ENCODE measurements at regions of chr1 and their contacts with region 1.

Region 1: GRCh38 chr1:99481391-99481996 is 164.4 kb upstream of the PALMD start:
- DNase-seq: no peak
- ATAC-seq: peak; percentile 61

Region 2: DNA sequence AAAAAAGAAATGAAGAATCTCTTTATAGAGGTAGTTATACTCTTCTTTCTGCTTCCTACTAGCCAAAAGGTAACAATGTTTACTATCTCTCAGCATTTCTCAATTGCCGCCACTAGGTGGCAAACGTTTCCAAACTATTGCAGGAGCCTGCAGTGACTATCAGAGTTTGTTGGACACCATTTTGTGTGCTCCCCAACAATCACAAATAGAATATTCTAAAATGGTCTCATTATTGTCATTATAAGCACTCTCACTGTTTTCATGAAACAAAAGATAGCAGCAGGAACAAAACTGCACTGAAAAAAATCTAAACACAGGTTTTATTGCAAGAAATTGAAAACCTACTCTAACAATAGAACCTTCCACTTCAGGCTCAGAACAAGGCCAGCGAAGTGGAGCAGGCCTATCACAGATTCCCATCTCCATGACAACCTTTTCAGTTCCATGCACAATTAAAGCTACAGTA is 301.1 kb before region 1 on chr1:
- intact Hi-C with region 1: loop called (anchors 5 kb)
- DNase-seq: peak; percentile 46
- ATAC-seq: peak; percentile 94

Region 3: DNA sequence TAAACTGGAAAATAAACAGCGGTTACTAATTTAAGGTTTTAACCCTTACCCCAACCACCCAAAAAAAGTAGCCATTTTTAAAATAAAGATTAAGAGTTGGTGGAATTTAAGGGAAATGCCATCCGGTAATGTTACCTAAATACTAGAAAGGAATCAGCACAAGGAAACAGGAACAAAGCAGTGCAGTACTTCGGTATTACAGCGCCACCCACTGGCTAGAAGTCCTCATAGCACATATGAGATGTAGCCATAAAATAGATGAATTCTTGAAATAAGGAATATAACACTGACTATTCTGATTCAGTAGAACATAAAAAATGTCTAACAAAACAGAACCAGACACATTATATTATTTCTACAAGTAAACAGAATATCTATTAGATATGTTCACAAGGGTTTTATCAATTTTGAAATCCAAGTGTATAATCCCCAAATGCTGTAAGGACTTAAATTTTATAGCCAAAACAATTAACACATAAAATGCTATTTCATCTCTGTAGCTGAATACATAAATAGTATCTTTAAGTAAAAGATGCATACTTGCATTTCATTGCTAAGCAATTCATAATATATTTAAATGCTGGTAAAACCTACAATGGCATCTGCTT is 226.1 kb after region 1 on chr1:
- intact Hi-C with region 1: loop called (anchors 10 kb)
- DNase-seq: peak; percentile 69
- ATAC-seq: peak; percentile 70

Measured in left ventricle myocardium superior (tissue), 1 donor.